A549 (cell line): ENCODE measurements at regions of chr14 and their contacts with region 1.

Region 1: DNA sequence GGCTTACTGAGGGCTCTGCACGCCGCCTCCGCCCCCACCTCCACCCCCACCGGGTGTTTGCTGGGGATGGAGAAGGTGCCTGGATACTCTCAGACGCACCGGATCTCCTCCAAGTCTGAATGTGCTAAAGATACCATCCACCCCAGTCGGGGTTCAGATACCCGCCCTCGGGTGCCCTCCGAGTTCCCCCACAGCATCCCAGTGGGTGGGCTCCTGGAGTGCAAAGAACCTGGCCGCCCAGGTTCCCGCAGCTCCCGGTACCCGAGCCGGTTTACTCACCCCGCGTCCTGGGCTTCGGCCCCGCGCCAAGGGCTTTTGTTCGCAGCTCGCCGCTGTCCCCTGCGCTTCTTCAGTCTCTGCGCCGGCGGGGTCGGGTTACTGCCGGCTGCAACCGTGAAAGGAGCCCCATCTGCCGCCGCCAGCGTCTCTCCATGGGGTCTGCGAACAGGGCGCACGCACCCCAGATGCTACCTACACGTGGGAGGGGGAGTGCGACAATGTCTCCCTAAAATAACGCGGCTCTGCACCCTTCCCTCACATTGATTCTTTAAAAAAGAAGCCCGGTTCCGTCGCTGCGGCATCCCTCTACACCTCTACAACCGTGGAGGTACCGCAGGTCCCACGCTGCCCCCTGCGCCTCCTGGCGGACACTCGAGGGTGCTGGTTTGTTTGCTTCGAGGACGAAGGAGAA is at the start of gene CCDC177:
- DNase-seq: peak; percentile 68 to 77
- ATAC-seq: peak; percentile 65 to 88
- H3K4me3 ChIP-seq: peak within 1 kb of the TSS; percentile 30
- H3K27ac ChIP-seq: no peak within 1 kb of the TSS
- H3K4me1 ChIP-seq: peaks cover 25% of the 10 kb centered on the region; the same call in 2 of the 3 replicates
- CTCF ChIP-seq: peak; percentile 93
- EP300 ChIP-seq: no peak
- POLR2A ChIP-seq: no peak
- RAD21 ChIP-seq: peak; percentile 68 to 78
- polyA plus RNA-seq, gene CCDC177: not detected in 2 replicates

Region 2: GRCh38 chr14:69505338-69506240 is 68.8 kb before region 1 on chr14:
- CTCF ChIA-PET with region 1: interaction called, 22 read pairs
- POLR2A ChIA-PET with region 1: interaction called, 3 read pairs
- DNase-seq: no peak
- ATAC-seq: no peak
- H3K4me3 ChIP-seq: no peak overlapping the region
- H3K27ac ChIP-seq: no peak overlapping the region
- H3K4me1 ChIP-seq: no peaks in the 10 kb centered on the region
- CTCF ChIP-seq: no peak
- EP300 ChIP-seq: no peak
- POLR2A ChIP-seq: no peak
- RAD21 ChIP-seq: no peak

Region 3: DNA sequence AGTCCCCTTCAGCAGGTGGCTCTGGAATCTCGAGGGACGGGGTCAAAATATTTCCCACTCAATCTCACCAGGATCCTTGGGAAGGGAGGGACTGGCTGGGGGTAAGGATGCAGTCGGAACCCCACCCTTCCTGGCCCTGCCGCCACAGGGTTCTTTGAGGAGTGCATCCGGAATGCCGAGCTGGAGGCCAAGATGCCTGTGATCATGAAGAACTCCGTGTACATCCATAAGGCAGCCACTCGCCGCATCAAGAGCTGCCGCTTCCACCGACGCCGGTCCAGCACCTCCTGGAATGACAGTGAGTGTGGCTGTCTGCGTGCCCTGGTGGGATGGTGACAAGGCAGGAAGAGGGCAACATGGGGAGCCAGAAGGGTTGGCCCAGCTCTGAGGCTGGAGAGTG is 46.8 kb before region 1 on chr14:
- CTCF ChIA-PET with region 1: interaction called, 38 read pairs
- POLR2A ChIA-PET with region 1: no interaction called
- DNase-seq: no peak
- ATAC-seq: no peak
- H3K4me3 ChIP-seq: no peak overlapping the region
- H3K27ac ChIP-seq: no peak overlapping the region
- H3K4me1 ChIP-seq: no peaks in the 10 kb centered on the region
- CTCF ChIP-seq: no peak
- EP300 ChIP-seq: no peak
- POLR2A ChIP-seq: no peak
- RAD21 ChIP-seq: no peak

Region 4: GRCh38 chr14:69535230-69535848 is 39.1 kb before region 1 on chr14:
- CTCF ChIA-PET with region 1: interaction called, 169 read pairs
- POLR2A ChIA-PET with region 1: interaction called, 3 read pairs
- DNase-seq: peak; percentile 58 to 83
- ATAC-seq: peak; percentile 91 to 94
- H3K4me3 ChIP-seq: no peak overlapping the region
- H3K27ac ChIP-seq: no peak overlapping the region
- H3K4me1 ChIP-seq: no peaks in the 10 kb centered on the region
- CTCF ChIP-seq: peak; percentile 80
- EP300 ChIP-seq: no peak
- POLR2A ChIP-seq: no peak
- RAD21 ChIP-seq: peak; percentile 70 to 76

Region 5: GRCh38 chr14:69543341-69544249 is 30.8 kb before region 1 on chr14:
- CTCF ChIA-PET with region 1: interaction called, 169 read pairs
- POLR2A ChIA-PET with region 1: no interaction called
- DNase-seq: peak; percentile 39 to 80
- ATAC-seq: peak; percentile 83 to 90
- H3K4me3 ChIP-seq: no peak overlapping the region
- H3K27ac ChIP-seq: peak overlapping the region in 1 of 2 experiments; percentile 33; a peak in 1 of 6 replicates
- H3K4me1 ChIP-seq: peaks cover 9% of the 10 kb centered on the region; the same call in 2 of the 3 replicates
- CTCF ChIP-seq: no peak
- EP300 ChIP-seq: no peak
- POLR2A ChIP-seq: no peak
- RAD21 ChIP-seq: no peak

Region 6: GRCh38 chr14:69554500-69554899 is 19.9 kb before region 1 on chr14:
- CTCF ChIA-PET with region 1: interaction called, 86 read pairs
- POLR2A ChIA-PET with region 1: no interaction called
- DNase-seq: no peak
- ATAC-seq: no peak
- H3K4me3 ChIP-seq: no peak overlapping the region
- H3K27ac ChIP-seq: no peak overlapping the region
- H3K4me1 ChIP-seq: peaks cover 9% of the 10 kb centered on the region; the same call in 2 of the 3 replicates
- CTCF ChIP-seq: no peak
- EP300 ChIP-seq: no peak
- POLR2A ChIP-seq: no peak
- RAD21 ChIP-seq: no peak

Region 7: DNA sequence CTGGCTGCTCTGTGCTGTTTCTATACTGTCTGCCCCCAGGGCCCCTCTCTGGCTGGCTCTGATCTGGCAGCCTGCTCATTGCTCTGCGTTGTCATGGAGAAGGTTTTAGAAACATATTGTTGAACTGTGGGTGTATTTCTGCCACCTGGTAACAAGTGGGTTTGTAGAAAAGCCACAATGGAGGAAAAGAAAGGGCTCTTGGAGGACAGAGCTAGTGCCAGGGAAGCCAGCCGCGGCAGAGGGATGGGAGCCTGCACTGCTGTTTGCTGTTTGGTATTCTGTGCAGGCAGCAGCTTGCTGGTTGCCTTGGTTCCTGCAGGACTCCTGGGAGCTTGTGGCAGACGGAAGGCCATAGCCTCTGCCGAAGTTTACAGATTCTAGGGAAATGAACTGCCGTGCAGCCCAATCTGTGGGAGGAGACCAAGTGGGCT is 14.8 kb before region 1 on chr14:
- CTCF ChIA-PET with region 1: interaction called, 86 read pairs
- POLR2A ChIA-PET with region 1: no interaction called
- DNase-seq: no peak
- ATAC-seq: no peak; a peak in 2 of 6 replicates
- H3K4me3 ChIP-seq: no peak overlapping the region
- H3K27ac ChIP-seq: no peak overlapping the region
- H3K4me1 ChIP-seq: no peaks in the 10 kb centered on the region
- CTCF ChIP-seq: no peak
- EP300 ChIP-seq: no peak
- POLR2A ChIP-seq: no peak
- RAD21 ChIP-seq: no peak

Region 8: DNA sequence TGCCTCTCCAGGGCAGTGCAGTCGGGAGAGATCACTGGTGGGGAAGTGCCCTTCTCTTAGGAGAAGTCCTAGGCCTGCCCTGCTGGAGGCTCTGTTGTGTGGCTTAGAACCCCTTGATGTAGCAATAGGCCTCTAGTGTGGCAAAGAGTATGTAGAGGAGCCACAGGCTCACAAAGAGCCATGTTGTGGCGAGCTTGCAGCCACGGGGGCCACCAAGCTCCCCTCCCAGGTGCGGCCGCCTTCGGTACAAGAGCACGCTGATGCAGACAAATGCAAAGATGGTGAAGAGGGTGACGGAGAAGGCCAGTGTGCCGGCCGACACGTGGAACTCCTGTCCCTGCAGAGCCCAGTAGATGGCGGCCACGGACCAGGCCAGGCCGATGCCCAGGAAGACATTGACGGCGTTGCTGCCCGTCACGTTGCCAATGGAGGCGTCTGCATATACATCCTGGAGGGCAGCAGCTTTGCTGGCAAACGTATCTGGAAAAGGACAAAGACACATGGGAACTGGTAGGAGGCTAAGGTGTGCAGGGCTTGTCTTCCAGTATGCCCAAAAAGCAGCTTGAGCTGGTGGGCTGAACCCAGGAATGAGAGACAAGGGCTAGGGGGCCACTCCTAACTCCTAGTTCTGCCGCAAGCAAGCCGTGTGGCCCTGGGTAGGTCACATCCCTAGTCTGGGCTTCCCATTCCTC is 471.6 kb after region 1 on chr14:
- CTCF ChIA-PET with region 1: no interaction called
- POLR2A ChIA-PET with region 1: no interaction called
- DNase-seq: peak; percentile 71 to 82
- ATAC-seq: peak; percentile 87 to 95
- H3K4me3 ChIP-seq: no peak overlapping the region
- H3K27ac ChIP-seq: peak overlapping the region; percentile 89 to 90
- H3K4me1 ChIP-seq: peaks cover 39% of the 10 kb centered on the region
- CTCF ChIP-seq: peak; percentile 74
- EP300 ChIP-seq: no peak
- POLR2A ChIP-seq: no peak; the same call in 1 of the 2 replicates
- RAD21 ChIP-seq: peak; percentile 90